ENCODE measurements at regions of chr10 and their contacts with region 1.

Region 1: GRCh38 chr10:28179006-28179742 is 123.7 kb downstream of the MPP7 start:
- DNase-seq: no peak
- ATAC-seq: no peak; the same call in 1 of the 2 replicates
- H3K4me3 Mint-ChIP-seq: no peak overlapping the region
- H3K27ac Mint-ChIP-seq: no peak overlapping the region
- H3K4me1 Mint-ChIP-seq: peaks cover 4% of the 10 kb centered on the region
- H3K27me3 Mint-ChIP-seq: no peaks in the 10 kb centered on the region
- CTCF ChIP-seq: peak; percentile 52; the same call in 1 of the 2 replicates

Region 2: GRCh38 chr10:27783660-27784059 is 395.5 kb before region 1 on chr10:
- CTCF ChIA-PET with region 1: interaction called, 11 read pairs
- POLR2A ChIA-PET with region 1: no interaction called
- DNase-seq: peak; percentile 54
- ATAC-seq: peak; percentile 99
- H3K4me3 Mint-ChIP-seq: no peak overlapping the region
- H3K27ac Mint-ChIP-seq: no peak overlapping the region
- H3K4me1 Mint-ChIP-seq: peaks cover 5% of the 10 kb centered on the region
- H3K27me3 Mint-ChIP-seq: no peaks in the 10 kb centered on the region
- CTCF ChIP-seq: 0 out of 2 replicates have a peak, but pooled peaks have one; percentile 27

Region 3: GRCh38 chr10:28334296-28334695 is 155.1 kb after region 1 on chr10:
- CTCF ChIA-PET with region 1: no interaction called
- POLR2A ChIA-PET with region 1: no interaction called
- DNase-seq: no peak
- ATAC-seq: no peak
- H3K4me3 Mint-ChIP-seq: no peak overlapping the region
- H3K27ac Mint-ChIP-seq: no peak overlapping the region
- H3K4me1 Mint-ChIP-seq: no peaks in the 10 kb centered on the region
- H3K27me3 Mint-ChIP-seq: no peaks in the 10 kb centered on the region
- CTCF ChIP-seq: no peak

Region 4: DNA sequence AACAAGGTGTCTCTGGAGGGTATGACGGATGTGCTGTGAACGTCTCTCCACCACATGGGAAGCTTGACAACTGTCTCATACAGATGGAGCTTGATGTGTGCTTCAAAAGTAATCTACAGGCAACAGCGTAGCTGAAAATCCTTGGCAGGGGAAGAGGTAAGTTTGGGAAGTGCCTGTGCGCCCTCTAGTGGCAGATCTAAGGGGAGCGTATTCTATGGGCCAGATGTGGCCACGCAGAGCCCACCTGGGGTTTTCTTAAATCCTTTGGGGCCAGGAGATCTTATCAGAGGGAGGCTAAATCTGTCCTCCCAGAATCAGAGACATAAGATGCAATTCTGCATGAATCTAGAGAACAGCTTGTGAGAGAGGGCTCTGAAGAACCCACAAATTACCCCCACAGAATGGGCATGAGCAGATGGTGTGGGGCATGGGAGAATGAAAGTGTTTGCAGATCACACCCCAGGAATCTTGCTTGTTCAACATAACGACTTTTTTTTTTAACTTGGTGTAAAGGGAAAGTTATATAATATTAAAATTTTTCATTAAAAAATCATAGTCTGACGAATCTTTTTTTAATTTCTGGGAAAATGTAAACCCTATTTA is 214.9 kb after region 1 on chr10:
- CTCF ChIA-PET with region 1: interaction called, 14 read pairs
- POLR2A ChIA-PET with region 1: no interaction called
- DNase-seq: peak; percentile 76
- ATAC-seq: peak; percentile 98
- H3K4me3 Mint-ChIP-seq: no peak overlapping the region
- H3K27ac Mint-ChIP-seq: no peak overlapping the region
- H3K4me1 Mint-ChIP-seq: peaks cover 2% of the 10 kb centered on the region; the same call in 1 of the 2 replicates
- H3K27me3 Mint-ChIP-seq: no peaks in the 10 kb centered on the region
- CTCF ChIP-seq: peak; percentile 90